Activated T-helper 2 cell treated with anti-CD3 and anti-CD28 coated beads, Interferon-gamma antibody, Interleukin-2, Interleukin-4, amounts not matched to agents 10 μg/mL and 5 μg/mL and 100 μg/mL, durations not matched to agents 14 hours and 24 hours and 36 hours (primary cell): ENCODE measurements at regions of chr3 and their contacts with region 1.

Region 1: GRCh38 chr3:63896332-63897030 is 15.7 kb downstream of the SCAANT1 start:
- DNase-seq: no peak
- H3K4me3 Mint-ChIP-seq: no peak overlapping the region
- H3K27ac Mint-ChIP-seq: no peak overlapping the region
- H3K4me1 Mint-ChIP-seq: peaks cover 38% of the 10 kb centered on the region
- H3K27me3 Mint-ChIP-seq: no peaks in the 10 kb centered on the region

Region 2: GRCh38 chr3:63774771-63775170 is 121.7 kb before region 1 on chr3:
- intact Hi-C with region 1: no loop called
- DNase-seq: no peak
- H3K4me3 Mint-ChIP-seq: no peak overlapping the region
- H3K27ac Mint-ChIP-seq: no peak overlapping the region
- H3K4me1 Mint-ChIP-seq: no peaks in the 10 kb centered on the region
- H3K27me3 Mint-ChIP-seq: no peaks in the 10 kb centered on the region

Region 3: GRCh38 chr3:63872135-63872903 is 24.2 kb before region 1 on chr3:
- intact Hi-C with region 1: loop called (anchors 2 kb)
- DNase-seq: no peak
- H3K4me3 Mint-ChIP-seq: no peak overlapping the region
- H3K27ac Mint-ChIP-seq: no peak overlapping the region
- H3K4me1 Mint-ChIP-seq: peaks cover 30% of the 10 kb centered on the region
- H3K27me3 Mint-ChIP-seq: no peaks in the 10 kb centered on the region

Region 4: DNA sequence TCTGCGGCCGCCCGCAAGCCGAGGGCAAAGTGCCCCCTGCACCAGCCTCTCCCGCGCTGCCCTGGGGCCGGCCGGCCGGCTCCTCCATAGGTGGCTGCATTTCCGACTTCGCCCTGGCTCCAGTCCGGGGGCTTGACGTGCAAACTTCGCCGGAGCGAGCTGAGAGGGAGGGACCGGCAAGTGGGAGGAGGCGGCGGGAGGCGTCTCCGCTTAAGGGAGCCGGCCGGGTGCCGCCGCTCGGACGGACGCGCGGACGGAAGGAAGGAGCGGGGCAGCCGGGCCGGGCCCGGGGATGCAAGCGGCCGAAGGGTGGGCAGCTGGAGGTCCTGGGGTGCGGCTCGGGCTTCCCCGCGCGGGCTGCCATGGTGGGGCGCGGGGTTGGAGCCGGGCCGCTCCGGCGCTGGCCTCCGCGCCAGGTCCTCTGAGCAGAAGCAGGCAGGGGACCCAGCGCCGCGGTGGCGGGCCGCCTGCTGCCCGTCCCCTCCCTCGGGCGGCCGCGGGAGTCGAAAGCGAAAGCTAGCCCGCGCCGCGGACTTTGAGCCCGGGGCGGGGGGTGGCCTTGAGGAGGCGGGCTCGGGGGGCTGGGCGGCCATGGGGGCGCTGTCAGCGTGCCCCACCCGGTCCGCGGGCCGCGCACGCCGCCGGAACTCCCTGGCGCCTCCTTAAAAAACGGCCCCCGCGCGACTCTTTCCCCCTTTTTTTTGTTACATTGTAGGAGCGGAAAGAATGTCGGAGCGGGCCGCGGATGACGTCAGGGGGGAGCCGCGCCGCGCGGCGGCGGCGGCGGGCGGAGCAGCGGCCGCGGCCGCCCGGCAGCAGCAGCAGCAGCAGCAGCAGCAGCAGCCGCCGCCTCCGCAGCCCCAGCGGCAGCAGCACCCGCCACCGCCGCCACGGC is 15.6 kb after region 1 on chr3 and contains the start of gene SCAANT1:
- intact Hi-C with region 1: loop called (anchors 1 kb)
- DNase-seq: peak; percentile 81
- H3K4me3 Mint-ChIP-seq: peak within 1 kb of the TSS; percentile 94
- H3K27ac Mint-ChIP-seq: peak within 1 kb of the TSS; percentile 97
- H3K4me1 Mint-ChIP-seq: peaks cover 33% of the 10 kb centered on the region
- H3K27me3 Mint-ChIP-seq: no peaks in the 10 kb centered on the region
- total RNA-seq, gene SCAANT1: 1.8 TPM in 1 of 2 replicates, not detected in the other